ENCODE measurements at regions of chr17 and their contacts with region 1.

Region 1: DNA sequence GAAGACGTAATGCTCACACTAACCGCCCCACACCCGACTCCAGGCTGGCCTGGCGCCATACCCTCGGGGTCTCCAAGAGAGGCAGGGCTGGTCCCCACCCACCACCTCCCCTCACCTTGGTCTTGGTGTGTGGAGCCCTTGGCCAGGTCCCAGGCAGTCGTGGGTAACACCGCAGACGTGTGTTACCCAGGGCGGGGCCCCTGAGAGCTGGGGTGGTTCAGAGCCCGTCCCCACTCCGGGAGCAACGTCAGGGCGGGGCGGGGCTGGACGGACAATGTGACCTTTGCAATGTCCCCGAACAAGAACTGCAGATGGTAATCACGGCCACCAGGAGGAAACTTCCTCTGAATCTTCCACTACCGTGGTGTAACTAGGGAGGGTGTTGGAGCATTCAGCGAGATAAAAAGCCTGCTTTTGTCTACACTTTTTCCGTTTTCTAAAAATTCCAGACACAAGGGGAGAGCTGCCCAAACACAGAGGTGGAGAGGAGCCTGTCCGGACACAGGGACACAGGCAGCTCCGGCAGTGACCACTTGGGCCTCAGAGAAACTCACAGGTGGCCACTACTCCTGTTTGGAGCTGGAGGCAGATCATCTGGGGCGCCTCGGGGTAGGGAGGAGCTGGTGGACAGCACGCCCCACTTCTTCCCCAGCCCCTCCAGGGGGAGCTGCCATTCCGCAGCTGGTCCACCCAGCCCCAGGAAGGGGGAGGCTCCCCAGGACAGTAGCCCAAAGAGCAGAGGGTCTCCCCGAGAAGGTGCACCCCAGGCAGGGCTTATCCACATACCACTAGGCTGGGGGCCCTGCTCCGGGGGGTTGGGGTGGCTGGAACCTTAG is 14.2 kb upstream of the SLC38A10 start:
- DNase-seq: peak; percentile 95 to 96
- H3K4me3 ChIP-seq: peak overlapping the region; percentile 45
- H3K4me3 Mint-ChIP-seq: peak overlapping the region; percentile 76
- H3K27ac Mint-ChIP-seq: peak overlapping the region; percentile 98
- H3K4me1 ChIP-seq: peaks cover 37% of the 10 kb centered on the region
- H3K4me1 Mint-ChIP-seq: peaks cover 20% of the 10 kb centered on the region
- H3K27me3 ChIP-seq: no peaks in the 10 kb centered on the region
- H3K27me3 Mint-ChIP-seq: no peaks in the 10 kb centered on the region
- CTCF ChIP-seq: peak; percentile 78 to 83

Region 2: GRCh38 chr17:81322271-81323082 is 13.2 kb after region 1 on chr17:
- CTCF ChIA-PET with region 1: interaction called, 18 read pairs
- POLR2A ChIA-PET with region 1: no interaction called
- intact Hi-C with region 1: no loop called
- DNase-seq: peak in 1 of 2 experiments; percentile 59
- H3K4me3 ChIP-seq: no peak overlapping the region
- H3K4me3 Mint-ChIP-seq: no peak overlapping the region
- H3K27ac Mint-ChIP-seq: no peak overlapping the region
- H3K4me1 ChIP-seq: no peaks in the 10 kb centered on the region
- H3K4me1 Mint-ChIP-seq: no peaks in the 10 kb centered on the region
- H3K27me3 ChIP-seq: no peaks in the 10 kb centered on the region
- H3K27me3 Mint-ChIP-seq: no peaks in the 10 kb centered on the region
- CTCF ChIP-seq: peak in 1 of 2 experiments; percentile 21

Region 3: DNA sequence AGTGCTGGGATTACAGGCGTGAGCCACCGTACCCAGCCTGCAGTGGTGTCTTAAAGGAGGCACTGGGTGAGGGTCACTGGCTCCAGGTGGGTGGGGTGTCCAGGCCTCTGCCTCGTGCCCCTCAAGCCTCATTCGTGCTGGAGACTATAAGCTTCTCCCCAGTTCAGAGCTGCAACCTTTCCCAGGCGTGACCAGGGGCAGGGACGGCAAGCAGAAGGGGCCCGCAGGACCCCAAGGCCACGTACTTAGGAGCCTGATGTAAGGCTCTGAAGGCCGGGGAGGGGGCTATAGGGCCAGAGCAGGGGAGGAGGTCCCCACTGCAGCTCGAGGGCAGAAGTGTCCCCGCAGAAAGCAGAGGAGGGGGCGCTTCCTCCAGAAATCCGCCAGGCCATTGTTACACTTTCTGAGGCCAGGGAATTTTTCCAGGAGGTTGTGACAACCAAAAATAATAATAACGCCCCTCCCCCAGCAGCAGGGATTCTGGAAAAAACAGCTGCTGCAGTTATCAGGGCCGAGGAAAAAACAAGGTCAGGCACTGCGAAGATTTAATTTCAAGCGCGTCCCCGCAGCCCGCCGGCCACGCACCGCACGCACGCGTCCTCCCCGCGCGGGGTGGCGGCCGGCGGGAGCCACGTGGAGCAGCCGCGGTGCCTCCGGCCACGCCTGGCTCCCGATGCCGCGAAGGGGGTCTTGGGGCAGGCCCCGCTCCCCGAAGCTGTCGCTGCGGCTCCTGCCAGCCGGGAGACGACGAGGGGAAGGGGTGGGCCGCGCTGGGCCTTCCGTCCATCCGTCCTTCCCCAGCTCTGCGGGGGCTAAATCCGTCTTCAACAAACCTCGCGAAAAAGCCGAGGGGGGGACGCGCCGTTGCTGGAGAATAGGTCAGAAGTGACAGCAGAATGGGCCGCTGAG is 31.6 kb after region 1 on chr17:
- CTCF ChIA-PET with region 1: interaction called, 11 read pairs
- POLR2A ChIA-PET with region 1: interaction called, 5 read pairs
- intact Hi-C with region 1: loop called (anchors 1 kb)
- DNase-seq: peak; percentile 61 to 68
- H3K4me3 ChIP-seq: peak overlapping the region; percentile 91
- H3K4me3 Mint-ChIP-seq: peak overlapping the region; percentile 85
- H3K27ac Mint-ChIP-seq: peak overlapping the region; percentile 29
- H3K4me1 ChIP-seq: peaks cover 42% of the 10 kb centered on the region
- H3K4me1 Mint-ChIP-seq: peaks cover 10% of the 10 kb centered on the region
- H3K27me3 ChIP-seq: no peaks in the 10 kb centered on the region
- H3K27me3 Mint-ChIP-seq: no peaks in the 10 kb centered on the region
- CTCF ChIP-seq: no peak

Region 4: DNA sequence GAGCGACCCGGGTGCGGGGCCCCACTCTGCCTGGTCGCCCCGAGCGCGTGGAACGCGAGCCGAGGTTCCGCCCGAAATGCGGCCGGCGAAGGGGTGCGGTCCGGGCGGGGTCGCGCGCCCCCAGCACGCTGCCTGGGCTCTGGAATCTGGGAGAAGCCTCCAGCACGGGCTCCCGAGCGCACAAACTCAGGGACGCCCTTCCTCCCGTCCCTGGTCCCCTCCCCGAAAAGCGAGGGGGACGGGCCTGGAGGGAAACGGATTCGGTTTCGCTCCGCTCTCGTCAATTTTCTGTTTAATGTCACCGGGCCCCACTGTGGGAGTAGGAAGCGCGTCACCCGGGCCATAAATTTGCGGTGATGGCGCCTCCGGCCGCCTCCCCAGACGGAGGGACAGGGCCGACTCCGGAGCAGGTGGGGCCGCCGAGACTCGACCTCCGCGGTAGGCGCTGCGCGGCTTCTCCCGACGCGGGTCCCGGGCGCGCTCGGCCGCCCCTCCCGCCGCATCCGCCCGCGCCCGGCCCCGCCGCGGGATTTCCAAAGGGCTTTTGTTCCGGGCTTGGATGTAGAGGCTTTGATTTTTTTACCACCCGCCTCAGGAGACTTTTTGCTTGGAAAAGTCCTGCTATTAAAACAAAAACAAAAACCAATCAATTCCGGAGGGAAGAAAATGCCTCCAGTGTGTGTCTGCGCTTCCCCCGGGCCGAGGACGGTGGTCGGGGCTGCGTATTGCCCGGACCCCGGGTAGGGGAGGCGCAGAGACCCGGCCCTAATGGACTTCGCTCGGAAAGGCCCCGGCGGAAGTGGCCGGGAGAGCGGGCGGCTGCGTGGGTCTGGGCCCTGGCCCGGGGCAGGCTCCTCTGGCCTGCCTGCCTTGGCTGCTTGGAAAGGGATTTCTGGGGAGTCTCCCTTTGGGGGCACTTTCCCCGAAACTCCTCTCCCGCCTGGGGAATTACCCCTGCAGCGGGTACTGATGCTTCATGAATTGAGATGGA is 78.1 kb after region 1 on chr17:
- CTCF ChIA-PET with region 1: interaction called, 82 read pairs
- POLR2A ChIA-PET with region 1: no interaction called
- intact Hi-C with region 1: loop called (anchors 2 kb)
- DNase-seq: peak; percentile 74 to 77
- H3K4me3 ChIP-seq: peak overlapping the region; percentile 39
- H3K4me3 Mint-ChIP-seq: peak overlapping the region; percentile 78
- H3K27ac Mint-ChIP-seq: peak overlapping the region; percentile 85
- H3K4me1 ChIP-seq: peaks cover 27% of the 10 kb centered on the region
- H3K4me1 Mint-ChIP-seq: peaks cover 20% of the 10 kb centered on the region
- H3K27me3 ChIP-seq: no peaks in the 10 kb centered on the region
- H3K27me3 Mint-ChIP-seq: no peaks in the 10 kb centered on the region
- CTCF ChIP-seq: no peak

Region 5: DNA sequence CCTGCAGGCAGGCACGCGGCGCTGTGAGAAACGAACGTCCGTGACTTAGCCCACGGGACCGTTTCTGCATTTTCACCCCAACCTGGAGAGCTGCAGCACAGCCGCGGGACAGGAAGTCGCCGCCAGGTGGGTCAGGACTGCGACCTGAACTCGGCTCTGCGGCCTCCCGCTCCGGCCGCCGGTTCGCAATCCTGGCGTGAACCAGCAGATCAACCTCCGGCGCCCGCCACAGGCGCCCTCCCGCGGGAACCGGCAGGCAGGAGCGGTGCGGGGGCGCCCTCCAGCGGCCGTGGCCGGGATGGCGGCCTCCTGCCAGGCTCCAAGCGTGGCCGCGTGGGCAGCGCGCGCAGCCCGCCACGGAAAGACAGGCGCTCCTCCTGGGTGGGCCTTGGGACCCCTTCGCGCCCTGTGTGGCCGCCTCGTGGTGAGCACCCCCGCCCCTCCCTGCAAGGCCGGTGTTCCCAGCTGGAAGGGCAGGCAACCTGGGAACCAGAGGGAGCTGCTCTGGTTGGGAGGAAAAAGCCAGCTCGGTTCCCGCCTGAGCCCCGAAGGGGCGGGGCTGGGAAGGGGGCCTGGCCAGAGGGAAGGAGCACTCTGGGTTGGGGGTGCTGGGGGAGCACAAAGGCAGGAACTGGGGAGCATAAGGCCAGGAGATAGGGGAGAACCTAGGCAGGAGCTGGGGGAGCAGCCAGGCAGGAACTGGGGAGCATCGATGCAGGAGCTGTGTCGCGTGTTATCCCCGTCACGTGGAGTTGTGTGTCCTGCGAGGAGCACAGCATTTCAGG is 175.1 kb after region 1 on chr17:
- CTCF ChIA-PET with region 1: interaction called, 34 read pairs
- POLR2A ChIA-PET with region 1: interaction called, 3 read pairs
- intact Hi-C with region 1: loop called (anchors 1 kb)
- DNase-seq: peak; percentile 93 to 96
- H3K4me3 ChIP-seq: peak overlapping the region; percentile 65
- H3K4me3 Mint-ChIP-seq: peak overlapping the region; percentile 60
- H3K27ac Mint-ChIP-seq: no peak overlapping the region
- H3K4me1 ChIP-seq: peaks cover 18% of the 10 kb centered on the region
- H3K4me1 Mint-ChIP-seq: no peaks in the 10 kb centered on the region
- H3K27me3 ChIP-seq: no peaks in the 10 kb centered on the region
- H3K27me3 Mint-ChIP-seq: no peaks in the 10 kb centered on the region
- CTCF ChIP-seq: peak; percentile 62 to 99

Measured in Caco-2 (cell line).